Sigmoid colon (tissue), 7 donors: ENCODE measurements at regions of chr19 and their contacts with region 1.

Region 1: DNA sequence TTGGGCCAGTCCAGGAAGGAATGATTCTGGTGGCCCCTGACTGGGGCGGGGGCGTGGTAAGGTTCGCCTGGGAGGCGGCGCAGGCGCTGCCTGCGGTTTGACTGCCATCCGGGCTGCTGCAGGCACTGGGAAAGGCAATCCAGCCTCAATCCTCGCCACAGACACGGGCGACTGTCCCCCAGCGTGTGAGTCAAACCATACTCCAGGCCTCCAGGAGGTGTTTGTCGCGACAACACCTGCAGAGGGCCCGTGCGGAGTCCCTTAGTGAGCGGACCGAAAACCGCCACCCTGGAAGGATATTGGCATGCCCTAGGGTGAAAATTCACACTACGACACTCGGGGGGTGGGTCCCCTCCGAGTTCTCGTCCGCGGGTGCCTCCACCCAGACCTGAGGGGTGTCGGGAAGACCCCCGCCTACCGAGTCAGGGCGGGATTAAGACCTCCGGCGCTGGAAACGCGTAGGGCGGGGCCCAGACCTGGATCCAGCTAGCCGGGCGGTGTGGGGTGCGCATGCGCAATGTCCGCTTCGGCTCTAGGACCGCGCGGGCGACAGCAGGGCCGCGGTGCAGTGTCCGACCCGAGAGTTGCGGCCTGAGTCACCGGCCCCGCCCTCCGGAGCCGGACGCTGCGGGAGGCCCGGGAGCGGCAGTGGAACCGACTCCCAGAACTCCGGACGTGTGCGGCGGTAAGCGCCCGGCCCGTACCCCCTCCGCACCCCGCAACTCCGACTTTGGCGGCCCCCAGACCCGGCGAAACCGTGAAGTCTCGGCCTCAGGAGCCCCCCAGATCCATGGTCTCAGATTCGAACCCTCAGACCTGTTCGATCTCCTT is at the start of gene CAPNS1:
- DNase-seq: peak; percentile 99
- H3K4me3 ChIP-seq: peak within 1 kb of the TSS; percentile 56 to 94 (median 82)
- H3K27ac ChIP-seq: peak within 1 kb of the TSS; percentile 89 to 100 (median 98)
- H3K4me1 ChIP-seq: peaks cover 0 to 30% (median 25%) of the 10 kb centered on the region in 4 donors
- H3K27me3 ChIP-seq: no peaks in the 10 kb centered on the region
- CTCF ChIP-seq: no peak
- EP300 ChIP-seq: peak in 1 of 4 donors; percentile 17
- POLR2A ChIP-seq: peak; percentile 96 to 97
- total RNA-seq, gene CAPNS1: 101 to 116 (median 104) TPM

Region 2: DNA sequence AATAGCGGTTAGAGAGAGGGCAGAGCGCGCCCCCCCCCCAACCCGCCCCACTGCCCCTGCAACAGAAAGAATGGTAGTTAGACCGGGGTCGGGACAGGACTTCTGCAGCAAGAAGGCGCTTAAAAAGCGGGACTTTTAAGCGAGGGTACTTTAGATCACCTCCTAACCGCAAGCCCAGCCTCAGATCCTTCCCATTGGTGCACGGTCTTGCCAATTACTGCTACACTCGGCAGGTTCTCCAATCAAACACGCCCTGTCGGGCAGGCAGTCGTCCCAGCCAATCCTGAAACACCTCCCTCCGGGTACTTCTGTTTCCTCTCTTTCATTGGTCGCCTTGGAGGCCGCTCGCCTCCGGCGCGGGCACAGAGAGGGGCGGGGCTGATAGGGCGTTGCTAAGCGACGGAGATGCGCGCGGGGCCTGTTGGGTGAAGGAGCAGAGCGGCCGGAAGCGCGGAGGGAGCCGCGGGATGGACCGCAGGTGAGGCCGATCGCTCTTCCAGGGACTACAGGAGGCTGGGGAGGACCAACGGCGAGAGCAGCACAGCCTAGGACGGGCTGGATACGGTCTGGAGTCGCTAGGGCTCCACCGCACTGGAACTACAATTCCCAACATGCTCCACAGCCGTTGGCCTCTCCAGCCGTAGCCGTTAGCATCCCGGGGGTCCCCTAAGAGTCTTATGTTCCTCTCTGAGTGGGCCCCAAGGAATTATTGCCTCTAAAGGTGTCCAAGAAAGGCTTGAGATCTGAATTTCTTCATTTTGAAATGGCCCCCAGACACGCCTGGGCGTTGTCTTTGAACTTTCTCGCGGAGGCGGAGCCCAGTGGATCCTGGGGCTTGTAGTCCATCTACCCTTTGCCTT is 381.7 kb before region 1 on chr19 and contains the start of gene PROSER3:
- intact Hi-C with region 1: loop called (anchors 5 kb)
- DNase-seq: peak; percentile 100
- H3K4me3 ChIP-seq: peak within 1 kb of the TSS; percentile 79 to 86 (median 83)
- H3K27ac ChIP-seq: peak within 1 kb of the TSS; percentile 98 to 99 (median 99)
- H3K4me1 ChIP-seq: peaks cover 0 to 63% (median 49%) of the 10 kb centered on the region in 4 donors
- H3K27me3 ChIP-seq: no peaks in the 10 kb centered on the region
- CTCF ChIP-seq: no peak
- EP300 ChIP-seq: no peak
- POLR2A ChIP-seq: peak; percentile 72 to 83
- total RNA-seq, gene PROSER3: 2.9 to 6.1 (median 5.2) TPM

Region 3: DNA sequence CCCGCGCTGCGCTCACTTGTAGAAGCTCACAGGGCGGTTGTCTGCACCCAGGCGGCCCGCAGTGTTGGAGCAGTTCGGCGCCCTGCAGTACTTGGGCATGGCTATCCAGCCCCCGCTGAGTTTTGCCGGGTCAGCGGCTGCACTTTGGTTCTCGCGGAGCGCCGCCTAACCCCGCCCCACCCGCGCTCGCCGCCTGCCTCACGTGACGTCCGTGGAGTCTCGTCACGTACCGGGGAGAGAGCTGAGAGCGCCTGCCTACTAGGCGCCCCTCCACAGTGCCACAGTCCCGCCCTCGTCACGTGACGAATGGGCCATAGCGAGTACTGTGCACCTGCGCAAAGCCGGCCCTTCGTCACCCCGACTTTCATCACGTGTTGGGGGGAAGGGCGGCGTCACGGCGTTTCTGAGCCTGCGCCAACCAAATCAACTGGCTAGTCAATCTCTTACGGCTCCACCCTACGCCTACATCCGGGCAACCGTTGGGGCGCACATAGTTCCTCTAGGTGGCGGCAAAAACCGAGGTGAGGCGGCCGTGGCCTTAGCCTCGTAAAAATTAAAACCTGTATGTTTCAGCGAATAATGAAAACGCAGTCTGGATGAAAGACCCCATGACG is 85.5 kb before region 1 on chr19 and contains the start of gene THAP8:
- intact Hi-C with region 1: no loop called
- DNase-seq: peak; percentile 100
- H3K4me3 ChIP-seq: peak within 1 kb of the TSS; percentile 52 to 69 (median 64)
- H3K27ac ChIP-seq: peak within 1 kb of the TSS; percentile 90 to 95 (median 93)
- H3K4me1 ChIP-seq: peaks cover 0 to 18% (median 17%) of the 10 kb centered on the region in 4 donors
- H3K27me3 ChIP-seq: no peaks in the 10 kb centered on the region
- CTCF ChIP-seq: peak; percentile 45 to 66 (median 54)
- EP300 ChIP-seq: peak in 2 of 4 donors; percentile 40 to 98
- POLR2A ChIP-seq: peak; percentile 60 to 83
- total RNA-seq, gene THAP8: 12.6 to 23.9 (median 18.9) TPM

Region 4: DNA sequence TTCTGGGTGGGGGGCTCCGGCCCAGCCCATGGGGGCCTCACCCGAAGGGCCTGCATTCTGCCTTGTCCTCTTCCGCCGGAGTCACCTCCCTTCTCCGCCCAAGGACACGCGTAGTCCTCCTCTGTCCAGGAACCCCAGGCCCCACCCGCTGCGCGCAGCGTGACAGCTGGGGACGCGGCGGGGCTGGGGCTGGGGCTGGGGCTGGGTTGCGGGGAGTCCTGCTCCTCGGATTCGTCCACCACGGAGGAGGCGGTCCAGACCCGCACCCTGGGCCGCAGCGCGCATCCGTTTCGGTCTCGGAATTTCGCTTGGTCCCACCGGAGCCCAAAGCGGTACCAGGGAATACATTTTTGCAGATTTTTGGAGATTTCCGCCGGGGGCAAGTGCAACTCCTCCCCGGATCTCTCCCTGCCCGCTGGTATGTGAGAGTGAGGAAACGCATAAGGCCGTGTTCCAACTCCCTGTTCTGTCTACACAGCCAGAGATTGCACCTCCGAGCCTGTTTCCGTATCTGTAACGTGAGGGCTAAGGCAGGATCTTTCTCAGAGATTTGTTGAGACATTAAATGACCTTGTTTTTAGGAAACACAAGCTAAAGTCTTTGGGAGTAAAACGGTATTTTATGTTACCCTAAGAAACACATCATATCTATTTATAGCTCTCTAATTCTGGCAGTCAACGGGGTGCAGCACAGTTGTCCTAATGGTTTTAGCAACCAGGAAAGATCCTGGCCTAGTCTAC is 12.8 kb after region 1 on chr19 and contains the start of gene COX7A1:
- intact Hi-C with region 1: loop called (anchors 1 kb)
- DNase-seq: peak; percentile 92
- H3K4me3 ChIP-seq: peak within 1 kb of the TSS; percentile 41 to 79 (median 58)
- H3K27ac ChIP-seq: peak within 1 kb of the TSS; percentile 91 to 99 (median 93)
- H3K4me1 ChIP-seq: peaks cover 0 to 31% (median 20%) of the 10 kb centered on the region in 4 donors
- H3K27me3 ChIP-seq: no peaks in the 10 kb centered on the region
- CTCF ChIP-seq: no peak
- EP300 ChIP-seq: no peak
- POLR2A ChIP-seq: peak in 1 of 2 donors; percentile 66
- total RNA-seq, gene COX7A1: 43.0 to 88.5 (median 72.4) TPM

Region 5: DNA sequence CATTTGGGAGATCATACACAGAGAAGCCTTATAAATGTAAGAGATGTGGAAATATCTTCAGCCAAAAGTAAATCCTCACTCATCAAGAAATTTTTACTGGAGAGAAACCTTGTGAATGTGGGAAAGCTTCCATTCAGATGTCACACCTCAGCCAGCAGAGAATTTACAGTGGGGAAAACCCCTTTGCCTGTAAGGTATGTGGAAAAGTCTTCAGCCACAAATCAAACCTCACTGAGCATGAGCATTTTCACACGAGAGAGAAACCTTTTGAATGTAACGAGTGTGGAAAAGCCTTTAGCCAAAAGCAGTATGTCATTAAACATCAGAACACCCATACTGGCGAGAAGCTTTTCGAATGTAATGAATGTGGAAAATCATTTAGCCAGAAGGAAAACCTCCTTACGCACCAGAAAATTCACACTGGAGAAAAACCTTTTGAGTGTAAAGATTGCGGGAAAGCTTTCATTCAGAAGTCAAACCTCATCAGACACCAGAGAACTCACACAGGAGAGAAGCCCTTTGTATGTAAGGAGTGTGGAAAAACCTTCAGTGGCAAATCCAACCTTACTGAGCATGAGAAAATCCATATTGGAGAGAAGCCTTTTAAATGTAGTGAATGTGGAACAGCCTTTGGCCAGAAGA is 96.7 kb after region 1 on chr19:
- intact Hi-C with region 1: no loop called
- DNase-seq: no peak
- H3K4me3 ChIP-seq: no peak overlapping the region
- H3K27ac ChIP-seq: no peak overlapping the region
- H3K4me1 ChIP-seq: no peaks in the 10 kb centered on the region
- H3K27me3 ChIP-seq: no peaks in the 10 kb centered on the region
- CTCF ChIP-seq: no peak
- EP300 ChIP-seq: no peak
- POLR2A ChIP-seq: no peak